ENCODE measurements at regions of chr17 and their contacts with region 1.

Region 1: DNA sequence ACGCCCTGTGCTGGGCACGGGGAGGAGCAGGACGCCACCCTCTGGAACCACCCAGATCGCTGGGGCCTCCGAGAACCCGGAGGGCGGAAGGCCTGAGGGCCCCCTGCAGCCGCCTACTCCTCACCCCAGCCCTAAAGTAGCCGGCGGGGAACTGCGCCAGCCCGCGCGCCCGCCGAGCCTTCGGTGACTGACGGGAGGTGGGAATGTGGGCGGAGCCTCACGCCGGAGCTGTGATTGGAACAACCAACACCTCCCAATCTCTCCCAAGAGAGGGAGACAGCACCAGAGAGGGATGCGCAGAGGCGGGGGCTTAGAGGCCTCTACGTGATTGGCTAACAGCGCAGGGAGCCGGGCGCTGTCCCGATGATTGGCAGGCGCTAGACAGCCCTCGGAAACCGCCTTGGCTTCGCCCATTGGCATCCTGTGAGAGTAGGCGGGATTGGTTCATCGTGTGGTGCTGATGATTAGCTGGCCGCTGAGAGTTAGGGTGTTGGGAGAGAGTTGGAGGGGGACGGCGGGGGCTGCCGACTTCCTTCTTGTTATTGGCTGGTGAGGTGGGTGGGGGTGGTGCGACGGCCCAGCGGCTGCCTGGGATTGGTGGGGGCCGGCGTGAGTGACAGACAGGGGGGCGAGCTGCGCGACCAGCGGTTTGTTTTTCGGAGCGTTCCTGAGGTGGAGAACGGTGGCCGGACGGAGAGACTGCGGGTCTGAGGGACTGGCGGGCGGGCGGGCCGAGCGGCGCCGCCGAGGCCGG is at the start of gene MAP3K3:
- DNase-seq: peak; percentile 98
- H3K4me3 Mint-ChIP-seq: peak within 1 kb of the TSS; percentile 99
- H3K27ac Mint-ChIP-seq: peak within 1 kb of the TSS; percentile 92
- H3K4me1 Mint-ChIP-seq: peaks cover 31% of the 10 kb centered on the region
- H3K27me3 Mint-ChIP-seq: peaks cover 13% of the 10 kb centered on the region
- total RNA-seq, gene MAP3K3: 27.9 and 28.7 TPM in 2 replicates

Region 2: DNA sequence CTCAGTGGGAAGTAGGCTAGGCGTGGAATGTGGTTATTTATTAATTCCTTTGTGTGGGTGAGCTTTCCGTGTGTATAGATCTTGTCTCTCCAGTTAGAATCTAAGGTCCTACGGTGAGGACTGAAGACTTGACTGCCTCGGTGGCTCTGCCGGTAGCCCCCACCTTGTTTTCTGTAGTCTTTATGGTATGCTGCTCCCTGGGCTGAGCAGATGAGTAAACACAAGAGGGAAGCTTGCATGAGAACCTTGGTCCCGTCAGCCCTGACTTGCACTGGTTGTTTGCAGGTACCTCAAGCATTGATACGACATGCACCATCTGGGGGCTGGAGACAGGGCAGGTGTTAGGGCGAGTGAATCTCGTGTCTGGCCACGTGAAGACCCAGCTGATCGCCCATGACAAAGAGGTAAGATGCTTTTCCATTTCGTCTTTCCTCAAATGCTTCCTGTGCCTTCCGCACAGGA is 42.4 kb before region 1 on chr17:
- intact Hi-C with region 1: no loop called
- DNase-seq: no peak
- H3K4me3 Mint-ChIP-seq: no peak overlapping the region
- H3K27ac Mint-ChIP-seq: no peak overlapping the region
- H3K4me1 Mint-ChIP-seq: peaks cover 3% of the 10 kb centered on the region
- H3K27me3 Mint-ChIP-seq: no peaks in the 10 kb centered on the region

Region 3: DNA sequence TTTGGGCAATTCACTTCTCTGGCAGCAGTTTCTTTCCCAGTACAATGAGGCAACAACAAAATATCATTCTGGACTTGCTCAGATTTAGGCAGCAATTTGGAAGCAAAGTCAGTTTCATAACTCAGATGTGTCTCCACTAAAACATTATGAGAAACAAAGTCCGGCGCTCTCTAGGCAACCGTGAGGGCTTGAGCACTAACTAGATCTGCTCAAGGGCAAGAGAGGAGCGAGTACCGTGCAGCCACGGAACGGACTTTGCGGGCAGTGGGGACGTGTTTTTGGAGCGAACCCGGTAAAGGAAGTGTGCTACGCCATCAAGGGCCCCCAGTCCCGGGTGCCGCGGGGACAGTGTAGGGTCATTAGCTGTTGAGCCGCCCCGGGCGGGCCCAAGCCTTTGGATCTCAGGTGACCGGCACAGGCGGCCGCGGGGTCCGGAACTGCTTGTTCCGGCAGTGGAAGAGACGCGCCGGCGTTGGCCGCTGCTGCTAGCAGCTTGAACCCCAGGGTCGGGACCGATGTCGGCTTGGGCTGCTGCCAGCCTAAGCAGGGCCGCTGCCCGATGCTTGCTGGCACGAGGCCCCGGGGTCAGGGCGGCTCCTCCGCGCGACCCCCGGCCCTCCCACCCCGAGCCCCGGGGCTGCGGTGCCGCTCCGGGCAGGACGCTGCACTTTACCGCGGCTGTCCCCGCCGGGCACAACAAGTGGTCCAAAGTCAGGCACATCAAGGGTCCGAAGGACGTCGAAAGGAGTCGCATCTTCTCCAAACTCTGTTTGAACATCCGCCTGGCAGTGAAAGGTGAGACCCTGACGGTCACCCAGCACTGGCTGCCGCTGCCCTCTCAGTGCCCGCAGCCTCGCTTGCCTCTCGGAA is 21.1 kb before region 1 on chr17 and contains the start of gene TACO1:
- intact Hi-C with region 1: loop called (anchors 1 kb)
- DNase-seq: peak; percentile 70
- H3K4me3 Mint-ChIP-seq: peak within 1 kb of the TSS; percentile 90
- H3K27ac Mint-ChIP-seq: peak within 1 kb of the TSS; percentile 74
- H3K4me1 Mint-ChIP-seq: peaks cover 34% of the 10 kb centered on the region
- H3K27me3 Mint-ChIP-seq: no peaks in the 10 kb centered on the region
- total RNA-seq, gene TACO1: 20.4 and 22.4 TPM in 2 replicates